B cell (primary cell): ENCODE measurements at regions of chr10 and their contacts with region 1.

Region 1: DNA sequence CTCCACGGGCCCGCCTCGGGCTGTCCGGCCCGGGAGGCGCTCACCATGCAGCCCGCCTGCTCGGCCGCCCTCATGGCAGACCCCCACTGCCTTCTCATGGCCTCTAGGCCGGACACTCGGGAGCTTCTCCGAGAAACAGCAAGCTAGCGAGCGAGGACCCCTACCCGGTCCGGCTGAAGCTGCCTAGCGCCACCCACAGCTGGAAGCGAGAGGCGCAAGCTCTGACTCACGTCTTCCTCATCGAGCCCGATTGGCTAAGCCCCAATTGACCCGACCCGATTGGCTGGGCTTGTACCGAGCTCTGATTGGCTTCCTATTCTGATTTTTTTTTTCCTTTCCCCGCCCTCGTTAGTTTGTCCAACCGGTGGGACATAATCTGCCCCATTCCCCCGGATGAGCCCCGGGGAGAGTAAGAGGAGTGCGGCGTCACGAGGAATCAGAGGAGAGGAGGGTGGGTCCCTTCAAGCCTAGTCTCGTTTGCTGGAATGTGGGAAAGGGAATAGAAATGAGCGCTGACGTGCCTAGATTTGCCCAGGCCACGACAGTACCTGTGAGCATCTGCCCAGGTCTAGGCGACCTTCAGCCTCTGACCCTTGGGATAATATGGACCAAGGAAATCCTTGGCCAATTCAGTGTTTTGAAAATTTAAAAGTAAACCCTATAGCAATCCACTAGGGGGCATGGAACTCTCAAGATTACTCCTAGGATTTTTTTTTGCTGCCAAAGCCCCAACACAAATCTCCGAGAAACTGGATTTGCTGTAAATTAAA is at the start of gene TYSND1:
- DNase-seq: peak; percentile 93
- ATAC-seq: peak; percentile 84
- H3K4me3 ChIP-seq: peak within 1 kb of the TSS; percentile 53 to 91 (median 81)
- H3K4me3 Mint-ChIP-seq: peak within 1 kb of the TSS; percentile 96
- H3K27ac ChIP-seq: peak within 1 kb of the TSS; percentile 84 to 93
- H3K27ac Mint-ChIP-seq: peak within 1 kb of the TSS; percentile 97
- H3K4me1 ChIP-seq: peaks cover 14 to 22% of the 10 kb centered on the region in 2 donors
- H3K4me1 Mint-ChIP-seq: peaks cover 37% of the 10 kb centered on the region
- H3K27me3 ChIP-seq: no peaks in the 10 kb centered on the region
- H3K27me3 Mint-ChIP-seq: no peaks in the 10 kb centered on the region
- CTCF ChIP-seq: peak; percentile 76
- total RNA-seq, gene TYSND1: 34.1 and 34.7 TPM in 2 replicates

Region 2: GRCh38 chr10:68331455-68332258 is 1815.0 kb before region 1 on chr10 and contains the start of gene HNRNPH3:
- CTCF ChIA-PET with region 1: no interaction called
- POLR2A ChIA-PET with region 1: no interaction called
- intact Hi-C with region 1: loop called (anchors 5 kb)
- DNase-seq: peak; percentile 100
- ATAC-seq: peak; percentile 84
- H3K4me3 ChIP-seq: peak within 1 kb of the TSS; percentile 77 to 95 (median 90)
- H3K4me3 Mint-ChIP-seq: peak within 1 kb of the TSS; percentile 99
- H3K27ac ChIP-seq: peak within 1 kb of the TSS; percentile 93 to 94
- H3K27ac Mint-ChIP-seq: peak within 1 kb of the TSS; percentile 100
- H3K4me1 ChIP-seq: peaks cover 42 to 51% of the 10 kb centered on the region in 2 donors
- H3K4me1 Mint-ChIP-seq: peaks cover 62% of the 10 kb centered on the region
- H3K27me3 ChIP-seq: no peaks in the 10 kb centered on the region
- H3K27me3 Mint-ChIP-seq: no peaks in the 10 kb centered on the region
- CTCF ChIP-seq: no peak
- total RNA-seq, gene HNRNPH3: 120 and 124 TPM in 2 replicates

Region 3: GRCh38 chr10:69817078-69817581 is 329.5 kb before region 1 on chr10:
- CTCF ChIA-PET with region 1: no interaction called
- POLR2A ChIA-PET with region 1: no interaction called
- intact Hi-C with region 1: no loop called
- DNase-seq: no peak
- ATAC-seq: no peak
- H3K4me3 ChIP-seq: no peak overlapping the region
- H3K4me3 Mint-ChIP-seq: no peak overlapping the region
- H3K27ac ChIP-seq: no peak overlapping the region
- H3K27ac Mint-ChIP-seq: no peak overlapping the region
- H3K4me1 ChIP-seq: no peaks in the 10 kb centered on the region
- H3K4me1 Mint-ChIP-seq: no peaks in the 10 kb centered on the region
- H3K27me3 ChIP-seq: no peaks in the 10 kb centered on the region
- H3K27me3 Mint-ChIP-seq: peaks cover 20% of the 10 kb centered on the region
- CTCF ChIP-seq: no peak

Region 4: GRCh38 chr10:70115948-70116682 is 30.6 kb before region 1 on chr10:
- CTCF ChIA-PET with region 1: interaction called, 131 read pairs
- POLR2A ChIA-PET with region 1: interaction called, 8 read pairs
- intact Hi-C with region 1: loop called (anchors 1 kb)
- DNase-seq: peak; percentile 71
- ATAC-seq: peak; percentile 83
- H3K4me3 ChIP-seq: no peak overlapping the region
- H3K4me3 Mint-ChIP-seq: no peak overlapping the region
- H3K27ac ChIP-seq: no peak overlapping the region
- H3K27ac Mint-ChIP-seq: no peak overlapping the region
- H3K4me1 ChIP-seq: peaks cover 0 to 4% of the 10 kb centered on the region in 2 donors
- H3K4me1 Mint-ChIP-seq: peaks cover 6% of the 10 kb centered on the region
- H3K27me3 ChIP-seq: no peaks in the 10 kb centered on the region
- H3K27me3 Mint-ChIP-seq: no peaks in the 10 kb centered on the region
- CTCF ChIP-seq: peak; percentile 98

Region 5: DNA sequence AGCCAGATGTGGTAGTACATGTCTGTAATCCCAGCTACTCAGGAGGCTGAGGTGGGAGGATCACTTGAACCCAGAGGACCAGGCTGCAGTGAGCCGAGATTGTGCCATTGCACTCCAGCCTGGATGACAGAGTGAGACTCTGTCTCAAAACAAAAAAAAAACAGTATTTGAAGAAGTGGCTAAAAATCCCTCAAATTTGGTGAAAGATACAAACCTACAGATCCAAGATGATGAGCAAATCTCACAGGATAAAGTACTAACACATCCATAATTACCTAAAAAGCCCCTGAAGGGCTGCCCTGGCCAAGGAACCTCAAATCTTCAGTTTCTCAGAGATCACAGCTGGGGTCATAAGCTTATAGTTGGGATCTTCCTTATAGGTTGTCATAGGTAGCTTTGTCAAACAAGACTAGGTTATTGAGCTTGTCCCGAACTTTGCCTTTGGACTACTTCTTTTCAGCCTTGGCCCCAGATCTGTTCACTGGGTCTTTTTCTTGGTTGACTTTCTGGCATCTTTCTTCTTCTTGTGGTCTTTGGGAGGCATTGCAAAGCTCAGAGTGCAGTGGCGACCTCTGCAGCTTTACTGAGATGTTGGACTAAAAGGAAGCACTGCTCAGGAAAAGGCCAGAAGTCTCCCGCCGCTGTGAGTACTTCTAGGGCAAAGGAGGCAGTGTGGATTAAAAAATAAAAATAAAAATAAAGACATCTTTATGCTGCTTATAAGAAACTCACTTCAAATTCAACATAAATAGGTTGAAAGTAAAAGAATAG is 52.2 kb after region 1 on chr10:
- CTCF ChIA-PET with region 1: no interaction called
- POLR2A ChIA-PET with region 1: no interaction called
- intact Hi-C with region 1: no loop called
- DNase-seq: no peak
- ATAC-seq: no peak
- H3K4me3 ChIP-seq: no peak overlapping the region
- H3K4me3 Mint-ChIP-seq: no peak overlapping the region
- H3K27ac ChIP-seq: no peak overlapping the region
- H3K27ac Mint-ChIP-seq: no peak overlapping the region
- H3K4me1 ChIP-seq: no peaks in the 10 kb centered on the region
- H3K4me1 Mint-ChIP-seq: no peaks in the 10 kb centered on the region
- H3K27me3 ChIP-seq: no peaks in the 10 kb centered on the region
- H3K27me3 Mint-ChIP-seq: no peaks in the 10 kb centered on the region
- CTCF ChIP-seq: no peak

Region 6: DNA sequence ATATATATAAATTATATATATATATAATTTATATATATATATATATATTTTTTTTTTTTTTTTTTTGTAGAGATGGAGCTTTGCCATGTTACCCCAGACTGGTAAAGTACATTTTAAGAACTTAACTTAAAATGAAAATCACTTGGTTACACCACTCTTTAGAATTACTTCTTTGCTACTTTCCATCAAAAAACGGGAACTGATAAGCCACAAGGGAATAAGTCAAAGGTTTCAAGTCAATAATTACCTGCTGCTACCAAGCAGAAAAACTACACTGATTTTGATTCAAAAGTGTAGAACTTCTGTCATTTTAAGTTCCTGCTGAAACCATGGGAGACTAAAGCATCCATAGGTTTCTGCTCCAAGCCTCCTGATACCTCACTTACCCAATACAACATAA is 74.4 kb after region 1 on chr10:
- CTCF ChIA-PET with region 1: interaction called, 6 read pairs
- POLR2A ChIA-PET with region 1: no interaction called
- intact Hi-C with region 1: loop called (anchors 2 kb)
- DNase-seq: no peak
- ATAC-seq: no peak
- H3K4me3 ChIP-seq: no peak overlapping the region
- H3K4me3 Mint-ChIP-seq: no peak overlapping the region
- H3K27ac ChIP-seq: no peak overlapping the region
- H3K27ac Mint-ChIP-seq: no peak overlapping the region
- H3K4me1 ChIP-seq: peaks cover 5% of the 10 kb centered on the region in 2 donors
- H3K4me1 Mint-ChIP-seq: peaks cover 12% of the 10 kb centered on the region
- H3K27me3 ChIP-seq: no peaks in the 10 kb centered on the region
- H3K27me3 Mint-ChIP-seq: no peaks in the 10 kb centered on the region
- CTCF ChIP-seq: no peak

Region 7: DNA sequence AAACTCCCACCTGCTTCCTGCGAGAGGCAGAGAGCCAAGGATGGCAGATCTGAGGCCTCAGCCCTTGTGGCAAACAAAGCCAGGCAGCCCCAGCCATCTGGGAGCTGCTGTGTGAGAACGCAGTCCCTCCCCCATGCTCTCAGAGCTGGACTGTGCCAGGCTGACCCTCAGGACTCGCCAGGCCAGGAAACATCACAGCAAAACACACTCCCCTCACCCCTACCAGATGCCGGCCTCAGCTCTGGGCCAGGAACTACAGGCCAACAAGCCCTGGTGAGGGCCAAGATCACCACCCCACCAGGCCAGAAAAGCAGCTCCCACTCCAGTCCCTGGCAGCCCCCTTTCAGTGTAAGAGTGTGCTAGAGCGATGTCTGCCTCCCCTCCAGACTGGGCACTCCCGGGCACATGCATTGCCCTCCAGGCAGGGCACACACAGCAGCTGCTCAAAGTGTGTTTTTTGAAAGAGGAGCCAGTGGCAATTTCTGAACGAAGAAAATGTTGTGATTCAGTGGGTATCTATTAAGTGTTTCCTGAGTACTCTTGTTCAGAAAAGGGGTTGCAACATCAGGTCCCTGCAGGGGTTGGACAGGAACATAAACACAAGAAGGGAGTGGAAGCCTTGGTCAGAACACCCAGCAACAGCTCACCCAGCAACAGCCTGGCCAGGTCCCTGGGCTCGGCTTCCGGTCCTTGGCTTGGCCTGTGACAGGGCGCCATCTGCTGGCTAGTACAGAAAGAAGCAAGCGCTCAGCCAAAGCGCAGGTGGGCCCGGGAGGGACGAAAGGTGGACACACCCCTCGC is 217.5 kb after region 1 on chr10:
- CTCF ChIA-PET with region 1: interaction called, 10 read pairs
- POLR2A ChIA-PET with region 1: no interaction called
- intact Hi-C with region 1: loop called (anchors 10 kb)
- DNase-seq: peak; percentile 88
- ATAC-seq: peak; percentile 97
- H3K4me3 ChIP-seq: no peak overlapping the region
- H3K4me3 Mint-ChIP-seq: no peak overlapping the region
- H3K27ac ChIP-seq: no peak overlapping the region
- H3K27ac Mint-ChIP-seq: no peak overlapping the region
- H3K4me1 ChIP-seq: peaks cover 2 to 11% of the 10 kb centered on the region in 2 donors
- H3K4me1 Mint-ChIP-seq: peaks cover 10% of the 10 kb centered on the region
- H3K27me3 ChIP-seq: no peaks in the 10 kb centered on the region
- H3K27me3 Mint-ChIP-seq: peaks cover 3% of the 10 kb centered on the region
- CTCF ChIP-seq: peak; percentile 85

Region 8: GRCh38 chr10:71696628-71697326 is 1550.1 kb after region 1 on chr10:
- CTCF ChIA-PET with region 1: no interaction called
- POLR2A ChIA-PET with region 1: no interaction called
- intact Hi-C with region 1: loop called (anchors 10 kb)
- DNase-seq: peak; percentile 69
- ATAC-seq: no peak
- H3K4me3 ChIP-seq: no peak overlapping the region
- H3K4me3 Mint-ChIP-seq: no peak overlapping the region
- H3K27ac ChIP-seq: no peak overlapping the region
- H3K27ac Mint-ChIP-seq: peak overlapping the region; percentile 20
- H3K4me1 ChIP-seq: peaks cover 39 to 55% of the 10 kb centered on the region in 2 donors
- H3K4me1 Mint-ChIP-seq: peaks cover 53% of the 10 kb centered on the region
- H3K27me3 ChIP-seq: peaks cover 0 to 6% (median 0%) of the 10 kb centered on the region in 4 experiments
- H3K27me3 Mint-ChIP-seq: no peaks in the 10 kb centered on the region
- CTCF ChIP-seq: peak; percentile 84